ENCODE measurements at regions of chr12 and their contacts with region 1.

Region 1: GRCh38 chr12:40107098-40107802 is 1.4 kb upstream of the SLC2A13 start:
- DNase-seq: peak; percentile 93
- ATAC-seq: peak; percentile 37
- H3K4me3 Mint-ChIP-seq: peak overlapping the region; percentile 45
- H3K27ac Mint-ChIP-seq: no peak overlapping the region
- H3K4me1 Mint-ChIP-seq: peaks cover 42% of the 10 kb centered on the region
- H3K27me3 Mint-ChIP-seq: peaks cover 24% of the 10 kb centered on the region

Region 2: DNA sequence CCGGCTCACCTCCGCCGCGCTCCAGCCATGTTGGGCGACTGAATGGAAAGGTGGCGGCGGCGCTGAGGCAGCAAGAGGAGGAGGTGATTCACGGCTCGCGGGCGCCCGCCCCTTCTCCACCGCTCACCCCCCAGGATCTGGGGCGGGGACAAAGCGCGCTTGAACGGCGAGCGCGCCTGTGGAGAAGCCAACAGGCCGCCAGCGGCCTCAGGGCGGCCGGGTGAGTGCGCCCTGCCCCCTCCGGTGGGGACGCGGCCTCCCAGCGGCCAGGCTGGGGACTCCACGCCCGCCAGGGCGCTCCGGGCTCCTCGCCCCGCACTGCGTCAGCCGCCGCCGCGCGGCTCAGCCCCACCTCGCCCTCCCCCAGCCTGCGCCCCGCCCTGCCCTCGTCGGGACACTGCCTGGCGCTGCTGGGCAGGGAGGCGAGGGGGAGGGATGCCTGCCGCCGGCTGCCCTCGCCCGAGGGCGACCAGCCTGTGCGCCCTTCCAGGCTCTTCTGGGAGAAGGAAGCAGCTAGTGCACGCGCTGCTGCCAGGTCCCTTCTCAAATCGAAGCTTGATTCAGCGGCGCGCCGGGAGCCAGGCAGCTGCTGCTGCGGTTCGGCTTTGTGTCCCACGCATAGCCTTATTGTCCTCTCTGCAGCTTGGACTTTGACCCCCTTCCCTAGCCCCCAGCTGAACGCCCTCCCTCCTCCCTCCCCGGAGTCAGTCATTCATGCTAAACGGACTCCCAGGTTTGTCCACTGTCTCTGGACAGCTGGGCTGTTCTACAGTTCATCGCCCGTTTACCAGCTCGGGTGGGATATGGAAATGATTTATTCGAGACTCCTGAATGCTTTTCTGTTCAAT is 663.9 kb before region 1 on chr12 and contains the start of gene KIF21A:
- CTCF ChIA-PET with region 1: interaction called, 3 read pairs
- POLR2A ChIA-PET with region 1: no interaction called
- intact Hi-C with region 1: loop called (anchors 2 to 10 kb)
- DNase-seq: peak; percentile 91
- ATAC-seq: peak; percentile 93
- H3K4me3 Mint-ChIP-seq: peak within 1 kb of the TSS; percentile 80
- H3K27ac Mint-ChIP-seq: peak within 1 kb of the TSS; percentile 78
- H3K4me1 Mint-ChIP-seq: peaks cover 19% of the 10 kb centered on the region
- H3K27me3 Mint-ChIP-seq: peaks cover 12% of the 10 kb centered on the region
- total RNA-seq, gene KIF21A: 12.0 to 13.9 TPM

Region 3: DNA sequence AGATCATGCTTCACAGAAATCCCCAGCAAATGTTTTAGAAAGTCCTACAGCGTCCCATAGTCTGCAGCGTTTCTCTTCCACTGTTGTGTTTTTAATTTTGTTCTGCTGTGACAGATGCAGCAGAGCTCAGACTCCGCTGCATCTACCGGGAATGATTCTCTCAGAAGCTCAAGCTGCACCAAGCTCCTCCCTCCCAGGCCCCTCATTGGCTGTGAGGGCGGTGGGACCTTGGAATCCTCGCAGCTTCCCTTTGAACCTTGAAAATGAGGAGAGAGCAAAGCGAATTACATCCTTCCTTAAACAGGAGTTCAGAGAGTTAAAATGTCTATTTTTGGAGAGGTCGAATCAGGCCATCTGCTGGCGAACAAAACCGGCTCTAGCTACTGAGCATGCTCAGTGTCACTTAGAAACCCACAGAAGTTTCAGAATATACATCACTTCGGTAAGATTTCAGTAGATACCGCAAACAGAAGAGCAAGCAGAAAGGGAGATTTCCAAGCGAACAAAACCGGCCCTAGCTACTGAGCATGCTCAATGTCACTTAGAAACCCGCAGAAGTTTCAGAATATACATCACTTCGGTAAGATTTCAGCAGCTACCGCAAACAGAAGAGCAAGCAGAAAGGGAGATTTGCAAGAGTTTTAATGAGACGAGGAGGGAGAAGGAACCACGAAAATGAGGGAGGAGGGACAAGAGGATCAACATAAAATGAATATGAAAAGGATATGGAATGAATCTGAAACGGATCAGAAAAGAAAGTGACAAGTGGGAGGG is 487.4 kb before region 1 on chr12 and contains the start of gene ABCD2:
- CTCF ChIA-PET with region 1: no interaction called
- POLR2A ChIA-PET with region 1: no interaction called
- intact Hi-C with region 1: loop called (anchors 2 to 5 kb)
- DNase-seq: peak; percentile 83
- ATAC-seq: peak; percentile 71
- H3K4me3 Mint-ChIP-seq: no peak within 1 kb of the TSS
- H3K27ac Mint-ChIP-seq: no peak within 1 kb of the TSS
- H3K4me1 Mint-ChIP-seq: peaks cover 58% of the 10 kb centered on the region
- H3K27me3 Mint-ChIP-seq: no peaks in the 10 kb centered on the region
- total RNA-seq, gene ABCD2: 2.1 to 2.3 TPM

Region 4: GRCh38 chr12:39692258-39692853 is 414.9 kb before region 1 on chr12:
- CTCF ChIA-PET with region 1: no interaction called
- POLR2A ChIA-PET with region 1: no interaction called
- intact Hi-C with region 1: no loop called
- DNase-seq: no peak
- ATAC-seq: no peak
- H3K4me3 Mint-ChIP-seq: no peak overlapping the region
- H3K27ac Mint-ChIP-seq: no peak overlapping the region
- H3K4me1 Mint-ChIP-seq: no peaks in the 10 kb centered on the region
- H3K27me3 Mint-ChIP-seq: no peaks in the 10 kb centered on the region

Region 5: DNA sequence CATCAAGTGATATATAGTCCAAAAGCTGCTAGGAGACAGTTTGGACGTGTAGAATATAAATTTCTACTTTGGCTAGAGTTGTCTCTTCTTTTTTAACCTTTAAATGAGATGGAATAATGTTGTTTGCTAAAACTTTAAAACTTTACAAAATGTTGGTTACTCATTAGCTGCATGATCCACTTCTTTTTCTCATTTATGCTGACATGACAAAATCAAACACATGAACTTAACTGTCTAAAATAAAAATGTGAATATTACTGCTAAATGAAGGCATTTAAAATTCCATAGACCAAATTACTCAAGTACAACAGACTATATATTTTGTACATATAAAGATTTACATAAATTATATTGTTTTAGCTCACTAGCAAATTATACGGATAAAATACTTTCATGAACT is 351.8 kb before region 1 on chr12:
- CTCF ChIA-PET with region 1: no interaction called
- POLR2A ChIA-PET with region 1: no interaction called
- intact Hi-C with region 1: no loop called
- DNase-seq: no peak
- ATAC-seq: no peak
- H3K4me3 Mint-ChIP-seq: no peak overlapping the region
- H3K27ac Mint-ChIP-seq: no peak overlapping the region
- H3K4me1 Mint-ChIP-seq: no peaks in the 10 kb centered on the region
- H3K27me3 Mint-ChIP-seq: no peaks in the 10 kb centered on the region

Region 6: GRCh38 chr12:40010899-40011774 is 96.1 kb before region 1 on chr12:
- CTCF ChIA-PET with region 1: interaction called, 51 read pairs
- POLR2A ChIA-PET with region 1: no interaction called
- intact Hi-C with region 1: loop called (anchors 1 kb)
- DNase-seq: peak; percentile 57
- ATAC-seq: peak; percentile 88
- H3K4me3 Mint-ChIP-seq: peak overlapping the region; percentile 10
- H3K27ac Mint-ChIP-seq: no peak overlapping the region
- H3K4me1 Mint-ChIP-seq: peaks cover 16% of the 10 kb centered on the region
- H3K27me3 Mint-ChIP-seq: no peaks in the 10 kb centered on the region